ENCODE measurements at regions of chr1 and their contacts with region 1.

Region 1: DNA sequence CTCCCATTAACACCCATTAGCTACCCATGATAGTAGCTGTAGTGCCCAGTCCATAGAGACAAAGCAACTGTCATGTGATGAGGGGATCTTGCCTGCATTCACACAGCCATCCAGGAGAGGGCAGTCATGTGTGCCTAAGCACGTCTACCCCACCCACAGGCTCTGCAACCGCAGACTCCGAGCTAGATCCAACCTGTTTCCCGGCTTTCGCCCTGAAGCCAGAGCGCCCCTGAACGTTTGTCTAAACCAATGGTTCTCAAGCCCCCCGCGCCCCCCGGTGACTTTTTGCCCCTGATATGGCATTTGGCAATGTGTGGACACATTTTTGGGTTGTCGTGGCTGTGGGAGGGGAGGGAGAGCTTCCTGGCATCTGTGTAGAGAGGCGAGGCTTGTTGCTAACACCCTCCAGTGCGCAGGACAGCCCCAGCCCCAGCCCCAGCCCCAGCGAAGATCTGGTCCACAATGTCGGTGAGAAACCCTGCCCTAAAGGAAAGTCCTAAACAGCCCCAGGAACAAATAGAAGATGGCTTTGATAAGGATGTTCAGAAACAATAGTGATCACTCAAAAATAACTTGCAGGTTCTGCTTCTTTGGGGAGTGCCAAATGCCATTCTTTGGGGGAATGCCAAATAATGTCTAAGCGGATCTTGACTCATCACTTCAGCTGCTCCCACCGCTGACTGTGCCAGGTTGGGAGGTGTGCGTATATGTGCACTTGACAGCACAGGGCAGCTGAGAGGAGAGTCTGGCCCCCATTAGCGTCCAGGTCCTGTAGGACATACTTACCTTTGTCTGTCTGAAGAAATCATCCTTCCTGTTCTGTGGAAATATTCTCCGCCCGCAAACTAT is 34.5 kb downstream of the SLC44A3 start:
- DNase-seq: peak; percentile 94
- H3K27ac ChIP-seq: peak overlapping the region; percentile 92
- CTCF ChIP-seq: peak; percentile 88

Region 2: GRCh38 chr1:95043141-95043980 is 188.7 kb after region 1 on chr1:
- CTCF ChIA-PET with region 1: interaction called, 55 read pairs
- POLR2A ChIA-PET with region 1: no interaction called
- DNase-seq: peak; percentile 82
- H3K27ac ChIP-seq: no peak overlapping the region
- CTCF ChIP-seq: peak; percentile 96